Endothelial cell of umbilical vein (primary cell): ENCODE measurements at regions of chr6 and their contacts with region 1.

Region 1: GRCh38 chr6:134882426-134883038 is 67.4 kb downstream of the ALDH8A1 start:
- DNase-seq: peak; percentile 79
- H3K4me3 ChIP-seq: no peak overlapping the region
- H3K27ac ChIP-seq: peak overlapping the region; percentile 3
- H3K4me1 ChIP-seq: peaks cover 13% of the 10 kb centered on the region
- H3K27me3 ChIP-seq: no peaks in the 10 kb centered on the region
- CTCF ChIP-seq: peak; percentile 82
- POLR2A ChIP-seq: no peak

Region 2: GRCh38 chr6:134111062-134111677 is 771.4 kb before region 1 on chr6:
- CTCF ChIA-PET with region 1: interaction called, 37 read pairs
- POLR2A ChIA-PET with region 1: no interaction called
- dilution Hi-C with region 1: no loop called
- intact Hi-C with region 1: loop called (anchors 1 kb)
- DNase-seq: peak; percentile 59
- H3K4me3 ChIP-seq: no peak overlapping the region
- H3K27ac ChIP-seq: no peak overlapping the region
- H3K4me1 ChIP-seq: no peaks in the 10 kb centered on the region
- H3K27me3 ChIP-seq: peaks cover 3 to 6% of the 10 kb centered on the region in 2 experiments
- CTCF ChIP-seq: peak; percentile 81 to 85
- POLR2A ChIP-seq: no peak

Region 3: DNA sequence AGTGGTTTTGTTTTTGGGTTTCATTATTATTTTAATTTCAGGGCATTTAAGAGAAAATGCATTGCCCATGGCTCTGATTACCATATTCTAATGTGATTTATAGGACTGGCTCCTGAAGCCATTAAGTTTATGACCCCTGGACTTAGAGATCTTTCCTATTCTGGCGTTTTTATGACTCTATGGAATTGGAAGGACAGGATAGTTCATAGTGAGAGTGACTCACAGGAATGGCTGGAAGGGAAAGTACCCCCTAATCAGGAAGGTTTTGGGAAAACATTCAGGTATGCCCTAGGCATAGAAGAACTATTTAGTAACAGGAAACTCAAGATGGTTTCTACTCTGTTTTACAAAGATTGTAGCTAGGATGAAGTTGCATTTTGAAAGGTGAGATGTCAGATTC is 721.5 kb before region 1 on chr6:
- CTCF ChIA-PET with region 1: interaction called, 30 read pairs
- POLR2A ChIA-PET with region 1: no interaction called
- dilution Hi-C with region 1: no loop called
- intact Hi-C with region 1: loop called (anchors 1 kb)
- DNase-seq: no peak
- H3K4me3 ChIP-seq: no peak overlapping the region
- H3K27ac ChIP-seq: no peak overlapping the region
- H3K4me1 ChIP-seq: no peaks in the 10 kb centered on the region
- H3K27me3 ChIP-seq: no peaks in the 10 kb centered on the region
- CTCF ChIP-seq: no peak
- POLR2A ChIP-seq: no peak

Region 4: GRCh38 chr6:134870677-134871498 is 11.6 kb before region 1 on chr6:
- CTCF ChIA-PET with region 1: interaction called, 12 read pairs
- POLR2A ChIA-PET with region 1: no interaction called
- dilution Hi-C with region 1: no loop called
- intact Hi-C with region 1: no loop called
- DNase-seq: no peak
- H3K4me3 ChIP-seq: no peak overlapping the region
- H3K27ac ChIP-seq: no peak overlapping the region
- H3K4me1 ChIP-seq: no peaks in the 10 kb centered on the region
- H3K27me3 ChIP-seq: no peaks in the 10 kb centered on the region
- CTCF ChIP-seq: no peak
- POLR2A ChIP-seq: no peak

Region 5: DNA sequence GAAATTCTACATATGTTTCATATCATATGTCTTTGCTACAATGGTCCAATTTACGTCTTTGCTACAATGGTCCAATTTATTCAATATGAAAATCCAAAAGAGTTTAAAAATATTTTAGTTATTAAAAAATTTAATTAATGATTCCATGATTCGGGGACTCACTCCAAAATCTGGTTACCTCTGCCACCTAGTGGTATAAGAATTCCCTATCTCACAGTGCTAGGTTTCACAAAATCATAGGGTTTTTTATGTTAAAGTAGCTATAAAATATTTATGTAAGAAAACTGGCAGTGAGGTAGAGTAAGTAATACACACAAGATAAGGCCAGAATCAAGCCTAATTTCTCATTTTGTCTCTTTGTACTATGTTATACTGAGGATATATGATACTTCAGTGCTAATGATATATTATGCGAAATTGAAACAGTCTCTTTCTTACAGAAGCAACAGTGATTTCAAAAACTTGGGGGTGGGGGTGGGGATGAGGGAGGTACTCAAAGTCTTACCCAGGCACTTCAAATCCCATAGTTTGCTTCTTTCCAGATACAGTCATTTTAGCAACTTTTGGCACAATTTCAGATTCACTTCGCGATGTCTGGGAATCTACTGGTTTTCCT is 119.8 kb after region 1 on chr6:
- CTCF ChIA-PET with region 1: interaction called, 10 read pairs
- POLR2A ChIA-PET with region 1: no interaction called
- dilution Hi-C with region 1: no loop called
- intact Hi-C with region 1: no loop called
- DNase-seq: peak; percentile 45
- H3K4me3 ChIP-seq: no peak overlapping the region
- H3K27ac ChIP-seq: no peak overlapping the region
- H3K4me1 ChIP-seq: no peaks in the 10 kb centered on the region
- H3K27me3 ChIP-seq: no peaks in the 10 kb centered on the region
- CTCF ChIP-seq: peak; percentile 36 to 38
- POLR2A ChIP-seq: no peak